ENCODE measurements at regions of chr17 and their contacts with region 1.

Region 1: DNA sequence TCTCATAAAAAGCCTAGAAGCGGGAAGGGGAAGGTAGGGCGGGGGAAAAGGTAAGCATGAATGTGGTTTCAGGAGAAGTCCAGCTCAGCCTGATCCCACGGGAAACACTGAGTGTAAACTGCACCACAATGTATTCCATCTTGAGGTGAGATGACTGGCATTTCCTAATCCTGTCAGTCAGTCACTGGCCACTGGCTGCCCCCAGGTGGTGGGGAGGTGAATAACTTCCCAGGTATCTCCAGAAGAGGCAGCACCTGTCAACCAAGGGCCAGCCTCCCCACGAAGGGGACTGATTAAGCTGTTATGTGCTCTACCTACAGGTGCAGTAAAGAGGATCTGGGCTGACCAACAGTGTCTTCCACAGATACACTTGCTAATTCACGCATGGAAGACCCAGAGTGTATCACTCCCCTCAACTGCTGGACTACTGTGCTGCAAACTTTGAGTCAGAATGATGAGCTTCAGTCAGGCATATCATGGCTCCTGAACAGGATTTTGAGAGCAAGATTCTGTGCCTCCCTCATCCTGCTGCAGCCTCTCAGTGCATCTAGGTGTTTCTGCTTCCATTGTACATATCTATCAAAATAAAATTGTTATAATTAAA is 108.5 kb upstream of the CCL2 start:
- DNase-seq: peak; percentile 46 to 69 (median 66)
- H3K4me3 ChIP-seq: no peak overlapping the region
- H3K27ac ChIP-seq: no peak overlapping the region
- H3K4me1 ChIP-seq: no peaks in the 10 kb centered on the region
- H3K27me3 ChIP-seq: peaks cover 0 to 9% (median 0%) of the 10 kb centered on the region in 5 experiments

Region 2: GRCh38 chr17:33778505-33779224 is 367.9 kb before region 1 on chr17:
- CTCF ChIA-PET with region 1: interaction called, 10 read pairs
- POLR2A ChIA-PET with region 1: interaction called, 3 read pairs
- DNase-seq: no peak
- H3K4me3 ChIP-seq: no peak overlapping the region
- H3K27ac ChIP-seq: no peak overlapping the region
- H3K4me1 ChIP-seq: no peaks in the 10 kb centered on the region
- H3K27me3 ChIP-seq: peaks cover 0 to 6% (median 0%) of the 10 kb centered on the region in 5 experiments

Region 3: DNA sequence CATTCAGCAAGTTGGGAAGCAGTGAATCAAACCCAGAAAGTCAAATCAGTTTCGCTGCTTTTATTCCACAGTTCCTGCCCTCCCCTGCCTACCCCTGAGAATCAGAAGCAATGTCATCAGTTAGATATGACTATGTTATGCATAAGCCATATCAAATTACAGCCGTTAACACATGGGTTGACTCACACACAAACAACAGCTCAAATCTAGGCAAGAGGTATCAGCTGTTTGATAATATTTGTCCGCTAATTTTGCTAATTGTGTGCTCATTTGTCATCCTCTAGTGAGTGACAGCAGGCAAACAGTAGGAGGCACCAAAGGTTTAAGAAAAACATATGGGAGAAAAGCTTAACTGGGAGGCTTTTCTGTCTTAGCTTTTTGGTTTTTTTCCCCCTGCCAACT is 218.8 kb before region 1 on chr17:
- CTCF ChIA-PET with region 1: interaction called, 79 read pairs
- POLR2A ChIA-PET with region 1: no interaction called
- DNase-seq: peak; percentile 45 to 73 (median 65)
- H3K4me3 ChIP-seq: no peak overlapping the region
- H3K27ac ChIP-seq: no peak overlapping the region
- H3K4me1 ChIP-seq: no peaks in the 10 kb centered on the region
- H3K27me3 ChIP-seq: peaks cover 0 to 4% (median 0%) of the 10 kb centered on the region in 5 experiments

Region 4: DNA sequence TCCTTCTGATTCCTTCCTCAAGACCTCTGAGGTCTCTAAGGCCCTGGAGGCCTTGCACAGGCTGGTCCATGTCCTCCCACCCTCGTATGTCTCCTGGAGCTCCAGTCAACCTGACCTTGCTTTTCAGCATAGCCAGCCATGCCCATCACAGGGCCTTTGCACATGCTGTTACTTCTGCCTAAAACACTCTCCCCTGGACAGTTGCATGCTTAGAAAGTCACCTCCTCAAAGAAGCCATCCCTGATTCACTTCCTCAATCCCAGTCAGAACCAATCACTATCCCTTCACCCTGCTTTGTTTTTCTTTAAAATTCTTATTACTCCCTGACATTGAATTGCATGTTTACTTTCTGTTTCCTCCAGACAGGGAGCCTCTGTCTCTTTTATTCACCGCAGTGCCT is 213.5 kb before region 1 on chr17:
- CTCF ChIA-PET with region 1: interaction called, 79 read pairs
- POLR2A ChIA-PET with region 1: no interaction called
- DNase-seq: no peak
- H3K4me3 ChIP-seq: no peak overlapping the region
- H3K27ac ChIP-seq: no peak overlapping the region
- H3K4me1 ChIP-seq: no peaks in the 10 kb centered on the region
- H3K27me3 ChIP-seq: no peaks in the 10 kb centered on the region

Region 5: DNA sequence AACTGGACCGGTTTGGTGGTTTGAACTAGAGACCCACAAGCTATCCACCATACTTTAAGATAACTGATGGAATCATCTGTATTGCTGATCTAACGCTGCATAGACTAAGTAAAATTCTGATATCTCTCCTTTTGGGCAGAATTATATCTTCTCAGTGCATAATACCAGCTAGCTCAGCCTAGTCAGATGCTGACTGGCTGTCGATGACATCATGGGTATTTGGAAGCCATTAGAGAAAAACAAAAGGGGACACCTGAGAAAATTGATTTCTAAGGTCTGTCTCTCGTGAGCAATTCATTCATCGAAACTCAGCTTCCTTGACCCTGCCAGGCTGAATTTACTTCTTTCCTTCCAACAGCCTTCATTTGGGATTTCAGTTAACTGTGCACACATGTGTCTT is 154.4 kb before region 1 on chr17:
- CTCF ChIA-PET with region 1: no interaction called
- POLR2A ChIA-PET with region 1: no interaction called
- DNase-seq: no peak
- H3K4me3 ChIP-seq: no peak overlapping the region
- H3K27ac ChIP-seq: no peak overlapping the region
- H3K4me1 ChIP-seq: peaks cover 0 to 25% (median 6%) of the 10 kb centered on the region in 4 experiments
- H3K27me3 ChIP-seq: no peaks in the 10 kb centered on the region

Region 6: DNA sequence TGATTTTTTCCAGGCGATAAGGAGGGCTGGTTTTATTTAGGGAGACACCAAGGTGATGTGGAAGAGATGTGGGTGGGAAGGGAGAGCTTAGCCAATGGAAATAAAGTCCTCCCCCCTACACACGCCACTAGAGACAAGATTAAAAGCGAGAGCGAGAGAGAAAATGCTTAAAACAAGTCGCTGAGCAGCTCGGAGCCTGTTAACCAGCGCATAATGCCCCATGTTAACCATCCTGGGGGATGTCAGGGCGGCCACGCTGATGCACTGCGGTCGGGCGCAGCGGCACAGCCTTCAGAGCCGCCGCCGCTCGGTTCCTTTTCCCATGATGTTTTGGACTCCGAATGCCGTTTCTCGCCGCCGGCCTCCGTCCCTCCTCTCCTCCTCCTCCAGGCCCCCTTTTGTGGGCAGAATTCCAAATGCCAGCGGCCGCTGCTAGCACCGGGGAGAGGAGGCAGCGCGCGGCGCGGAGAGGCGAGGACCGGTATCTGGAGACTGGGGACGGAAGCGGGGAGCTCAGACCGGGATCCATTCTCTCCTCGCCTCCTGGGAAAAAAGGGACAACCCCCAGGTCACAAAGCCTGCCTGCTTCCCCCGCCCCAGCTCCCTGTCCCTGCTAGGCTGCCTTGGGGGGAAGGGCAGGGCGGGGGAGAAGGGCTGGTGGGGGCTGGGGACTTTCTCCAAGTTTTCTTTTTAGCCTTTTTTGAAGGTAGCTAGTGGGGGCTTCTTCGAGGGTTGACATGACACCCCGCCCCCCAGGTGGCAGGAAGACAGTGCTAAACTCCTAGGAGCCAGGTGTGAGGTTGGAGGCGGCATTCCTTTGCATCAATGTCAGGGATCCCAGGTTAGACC is 10.4 kb after region 1 on chr17:
- CTCF ChIA-PET with region 1: interaction called, 74 read pairs
- POLR2A ChIA-PET with region 1: no interaction called
- DNase-seq: peak in 2 of 3 donors; percentile 55 to 65
- H3K4me3 ChIP-seq: peak overlapping the region in 5 of 7 experiments; percentile 1 to 67 (median 56)
- H3K27ac ChIP-seq: no peak overlapping the region
- H3K4me1 ChIP-seq: peaks cover 0 to 46% (median 27%) of the 10 kb centered on the region in 4 experiments
- H3K27me3 ChIP-seq: peaks cover 5 to 39% (median 11%) of the 10 kb centered on the region in 5 experiments

Region 7: GRCh38 chr17:34163646-34164045 is 17.1 kb after region 1 on chr17:
- CTCF ChIA-PET with region 1: interaction called, 74 read pairs
- POLR2A ChIA-PET with region 1: no interaction called
- DNase-seq: peak; percentile 51 to 63 (median 62)
- H3K4me3 ChIP-seq: no peak overlapping the region
- H3K27ac ChIP-seq: no peak overlapping the region
- H3K4me1 ChIP-seq: peaks cover 0 to 16% (median 2%) of the 10 kb centered on the region in 4 experiments
- H3K27me3 ChIP-seq: peaks cover 0 to 10% (median 0%) of the 10 kb centered on the region in 5 experiments